ENCODE measurements at regions of chr3 and their contacts with region 1.

Region 1: DNA sequence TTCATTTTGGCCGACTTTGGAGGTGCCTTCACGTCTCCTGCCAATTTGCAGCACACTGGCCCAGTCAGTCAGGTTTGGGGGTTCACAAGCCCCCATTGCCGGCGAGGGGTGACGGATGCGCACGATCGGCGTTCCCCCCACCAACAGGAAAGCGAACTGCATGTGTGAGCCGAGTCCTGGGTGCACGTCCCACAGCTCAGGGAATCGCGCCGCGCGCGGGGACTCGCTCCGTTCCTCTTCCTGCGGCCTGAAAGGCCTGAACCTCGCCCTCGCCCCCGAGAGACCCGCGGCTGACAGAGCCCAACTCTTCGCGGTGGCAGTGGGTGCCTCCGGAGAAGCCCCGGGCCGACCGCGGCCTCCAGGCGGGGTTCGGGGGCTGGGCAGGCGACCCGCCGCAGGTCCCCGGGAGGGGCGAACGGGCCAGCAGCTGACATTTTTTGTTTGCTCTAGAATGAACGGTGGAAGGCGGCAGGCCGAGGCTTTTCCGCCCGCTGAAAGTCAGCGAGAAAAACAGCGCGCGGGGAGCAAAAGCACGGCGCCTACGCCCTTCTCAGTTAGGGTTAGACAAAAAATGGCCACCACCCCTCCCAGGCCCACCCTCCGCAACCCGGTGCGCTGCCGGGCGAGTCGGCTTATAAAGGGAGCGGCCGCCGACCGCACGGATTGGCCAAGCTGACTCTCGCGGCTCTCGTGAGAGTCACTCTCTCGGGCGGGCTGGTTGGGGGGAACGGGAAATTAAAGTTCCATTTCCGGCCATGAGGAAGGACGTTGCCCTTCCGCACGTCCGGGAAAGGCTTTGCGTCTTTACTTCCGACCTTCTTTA is at the start of gene TERC:
- DNase-seq: peak; percentile 94
- H3K4me3 Mint-ChIP-seq: peak within 1 kb of the TSS; percentile 97
- H3K27ac Mint-ChIP-seq: peak within 1 kb of the TSS; percentile 99
- H3K4me1 Mint-ChIP-seq: peaks cover 19% of the 10 kb centered on the region
- H3K27me3 Mint-ChIP-seq: no peaks in the 10 kb centered on the region
- total RNA-seq, gene TERC: 16.0 to 20.4 TPM

Region 2: DNA sequence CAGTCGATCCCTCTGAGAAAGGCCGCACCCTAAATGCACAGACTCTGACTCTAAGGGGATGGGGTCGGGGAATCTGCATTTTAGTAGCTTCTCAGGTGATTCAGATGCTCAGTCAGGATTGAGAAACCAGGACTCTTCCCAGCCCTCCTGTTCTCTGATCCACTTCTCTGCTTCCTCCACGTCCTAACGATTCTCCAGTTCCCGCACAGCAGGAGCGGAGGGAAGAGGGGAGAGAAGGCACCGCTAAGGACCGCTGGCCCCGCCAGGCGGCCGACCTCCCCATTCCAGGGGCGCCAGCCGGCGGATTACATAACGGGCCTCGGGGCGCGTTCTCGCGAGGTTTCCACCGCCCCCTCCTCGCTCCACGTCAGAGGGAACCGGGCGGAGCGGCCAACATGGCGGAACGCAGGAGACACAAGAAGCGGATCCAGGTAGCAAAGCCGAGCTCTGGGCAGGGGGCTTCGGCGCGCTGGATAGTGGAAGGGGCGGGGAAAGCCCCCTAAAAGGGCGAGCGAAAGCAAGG is 201.8 kb after region 1 on chr3 and contains the start of gene SEC62:
- CTCF ChIA-PET with region 1: interaction called, 8 read pairs
- intact Hi-C with region 1: loop called (anchors 1 kb)
- DNase-seq: peak; percentile 97
- H3K4me3 Mint-ChIP-seq: peak within 1 kb of the TSS; percentile 96
- H3K27ac Mint-ChIP-seq: peak within 1 kb of the TSS; percentile 97
- H3K4me1 Mint-ChIP-seq: peaks cover 63% of the 10 kb centered on the region
- H3K27me3 Mint-ChIP-seq: no peaks in the 10 kb centered on the region
- total RNA-seq, gene SEC62: 60.0 to 73.3 TPM

Region 3: DNA sequence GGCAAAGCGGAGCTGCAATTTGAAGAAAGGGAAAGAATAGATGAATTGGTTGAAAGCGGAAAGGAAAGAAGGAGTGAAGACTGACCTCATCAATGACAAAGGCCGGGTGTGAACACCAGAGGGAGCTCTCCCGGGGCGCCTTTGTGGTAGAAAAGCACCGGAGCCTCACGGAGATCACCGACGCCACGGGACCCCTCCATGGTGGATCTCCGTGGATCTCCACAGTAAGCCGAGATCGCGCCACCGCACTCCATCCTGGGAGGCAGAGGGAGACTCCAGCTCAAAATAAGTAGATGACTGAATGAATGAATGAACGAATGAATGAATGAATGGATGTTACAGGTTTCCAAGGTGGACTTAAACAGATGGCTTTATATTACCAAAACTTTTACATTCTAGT is 298.1 kb after region 1 on chr3:
- CTCF ChIA-PET with region 1: no interaction called
- intact Hi-C with region 1: no loop called
- DNase-seq: no peak
- H3K4me3 Mint-ChIP-seq: no peak overlapping the region
- H3K27ac Mint-ChIP-seq: no peak overlapping the region
- H3K4me1 Mint-ChIP-seq: peaks cover 10% of the 10 kb centered on the region
- H3K27me3 Mint-ChIP-seq: no peaks in the 10 kb centered on the region

Region 4: GRCh38 chr3:170098753-170099152 is 334.1 kb after region 1 on chr3:
- CTCF ChIA-PET with region 1: no interaction called
- intact Hi-C with region 1: loop called (anchors 2 kb)
- DNase-seq: no peak
- H3K4me3 Mint-ChIP-seq: peak overlapping the region; percentile 2
- H3K27ac Mint-ChIP-seq: peak overlapping the region; percentile 95
- H3K4me1 Mint-ChIP-seq: peaks cover 59% of the 10 kb centered on the region
- H3K27me3 Mint-ChIP-seq: no peaks in the 10 kb centered on the region

Region 5: DNA sequence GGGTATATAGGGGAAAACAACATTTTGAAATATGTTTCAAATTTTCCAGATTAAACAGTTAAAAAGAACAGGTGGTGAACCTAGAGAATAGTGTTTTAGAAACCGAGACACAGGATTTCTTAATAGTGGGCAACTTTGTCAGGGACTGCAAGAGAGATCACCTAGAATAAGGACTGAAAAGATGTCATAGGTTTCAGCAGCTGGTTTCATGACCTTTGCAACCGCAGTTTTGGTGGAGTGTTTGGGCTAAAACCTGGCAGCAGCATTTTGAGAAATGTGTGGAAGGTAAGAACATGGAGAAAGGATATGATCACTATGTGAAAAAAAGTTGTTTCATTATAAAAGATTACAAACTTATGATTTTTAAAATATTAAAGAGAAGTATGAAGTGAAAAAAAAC is 492.5 kb after region 1 on chr3:
- CTCF ChIA-PET with region 1: no interaction called
- intact Hi-C with region 1: loop called (anchors 5 kb)
- DNase-seq: peak; percentile 58
- H3K4me3 Mint-ChIP-seq: no peak overlapping the region
- H3K27ac Mint-ChIP-seq: no peak overlapping the region
- H3K4me1 Mint-ChIP-seq: peaks cover 41% of the 10 kb centered on the region
- H3K27me3 Mint-ChIP-seq: no peaks in the 10 kb centered on the region

Region 6: GRCh38 chr3:170689893-170690660 is 925.4 kb after region 1 on chr3:
- CTCF ChIA-PET with region 1: no interaction called
- intact Hi-C with region 1: loop called (anchors 10 kb)
- DNase-seq: peak; percentile 59
- H3K4me3 Mint-ChIP-seq: no peak overlapping the region
- H3K27ac Mint-ChIP-seq: no peak overlapping the region
- H3K4me1 Mint-ChIP-seq: peaks cover 3% of the 10 kb centered on the region
- H3K27me3 Mint-ChIP-seq: no peaks in the 10 kb centered on the region